Activated T-helper 2 cell treated with anti-CD3 and anti-CD28 coated beads, Interferon-gamma antibody, Interleukin-2, Interleukin-4, amounts not matched to agents 10 μg/mL and 5 μg/mL and 100 μg/mL, durations not matched to agents 14 hours and 24 hours and 36 hours (primary cell): ENCODE measurements at regions of chr7 and their contacts with region 1.

Region 1: DNA sequence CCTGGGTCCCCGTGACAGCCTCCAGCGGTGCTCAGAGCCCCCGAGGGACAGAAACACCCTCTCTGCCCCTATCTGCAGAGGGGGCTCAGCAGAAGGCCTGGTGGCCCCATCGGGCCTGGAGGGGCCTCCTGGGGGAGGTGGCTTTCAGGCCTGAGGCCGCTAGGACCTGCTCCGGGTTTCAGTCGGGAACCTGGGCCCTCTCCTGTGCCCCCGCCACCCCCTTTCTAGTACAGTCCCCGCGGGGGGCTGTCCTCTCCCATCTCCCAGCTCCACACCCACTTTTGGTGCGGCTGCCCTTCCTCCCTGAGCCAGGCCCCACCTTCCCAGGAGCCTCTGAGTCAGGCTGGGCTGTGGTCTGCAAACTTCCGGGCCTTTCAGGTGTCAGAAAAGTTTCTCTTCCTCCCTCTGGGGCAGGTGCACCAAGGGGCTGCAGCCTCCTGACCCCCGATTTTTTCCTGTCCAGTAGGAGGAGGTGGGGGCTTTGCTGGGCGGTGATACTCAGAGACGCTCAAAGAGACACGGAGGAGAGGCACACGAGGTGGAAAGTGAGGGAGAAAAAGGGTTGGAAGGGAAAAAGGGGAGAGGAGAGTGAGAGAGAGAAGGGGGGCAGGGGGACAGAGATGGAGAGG is 692 bp downstream of the CARD11 start:
- DNase-seq: peak; percentile 60
- H3K4me3 Mint-ChIP-seq: peak overlapping the region; percentile 87
- H3K27ac Mint-ChIP-seq: peak overlapping the region; percentile 88
- H3K4me1 Mint-ChIP-seq: peaks cover 35% of the 10 kb centered on the region
- H3K27me3 Mint-ChIP-seq: no peaks in the 10 kb centered on the region

Region 2: GRCh38 chr7:2978403-2978802 is 64.6 kb before region 1 on chr7:
- intact Hi-C with region 1: loop called (anchors 5 kb)
- DNase-seq: peak; percentile 59
- H3K4me3 Mint-ChIP-seq: peak overlapping the region; percentile 51
- H3K27ac Mint-ChIP-seq: peak overlapping the region; percentile 58
- H3K4me1 Mint-ChIP-seq: peaks cover 44% of the 10 kb centered on the region
- H3K27me3 Mint-ChIP-seq: no peaks in the 10 kb centered on the region

Region 3: GRCh38 chr7:3028071-3028757 is 14.8 kb before region 1 on chr7:
- intact Hi-C with region 1: loop called (anchors 2 kb)
- DNase-seq: no peak
- H3K4me3 Mint-ChIP-seq: no peak overlapping the region
- H3K27ac Mint-ChIP-seq: peak overlapping the region; percentile 84
- H3K4me1 Mint-ChIP-seq: peaks cover 22% of the 10 kb centered on the region
- H3K27me3 Mint-ChIP-seq: no peaks in the 10 kb centered on the region

Region 4: DNA sequence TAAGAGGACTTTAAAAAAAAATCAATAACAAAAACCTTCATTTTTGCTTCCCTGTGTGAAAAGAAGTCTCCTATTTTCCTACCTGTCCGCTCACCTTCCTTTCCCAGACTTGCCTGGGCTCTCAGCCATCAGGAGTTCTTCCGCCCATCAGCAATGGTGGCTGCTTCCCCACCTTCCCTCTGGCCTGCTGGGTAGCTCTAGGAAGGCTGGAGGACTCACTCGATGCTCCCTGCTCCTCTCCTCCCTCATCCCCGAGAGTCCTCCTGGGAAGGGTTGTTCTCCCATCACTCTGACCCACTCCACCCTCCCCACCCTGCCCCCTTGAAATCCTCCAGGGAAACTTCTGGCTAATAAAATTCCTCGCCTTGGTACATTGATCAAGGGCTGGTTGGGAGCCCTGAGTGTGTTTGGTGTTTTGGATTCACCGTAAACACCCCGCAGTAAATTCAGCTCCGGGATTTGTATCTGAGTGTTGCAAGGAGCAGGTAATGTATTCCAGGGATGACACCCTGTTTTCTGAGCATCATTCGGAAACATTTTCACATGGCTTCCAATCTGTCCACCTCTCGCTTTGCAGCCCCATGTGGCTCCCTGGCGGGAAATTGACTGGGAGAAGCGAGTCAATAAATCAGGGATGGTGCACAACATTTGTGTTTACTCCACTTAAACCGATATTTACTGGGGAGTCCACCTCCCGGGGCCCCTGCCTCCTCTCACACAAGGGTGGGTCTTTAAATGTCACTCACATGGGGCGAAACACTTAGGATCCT is 131.7 kb after region 1 on chr7:
- intact Hi-C with region 1: no loop called
- DNase-seq: no peak
- H3K4me3 Mint-ChIP-seq: no peak overlapping the region
- H3K27ac Mint-ChIP-seq: no peak overlapping the region
- H3K4me1 Mint-ChIP-seq: no peaks in the 10 kb centered on the region
- H3K27me3 Mint-ChIP-seq: no peaks in the 10 kb centered on the region